ENCODE measurements at regions of chr4 and their contacts with region 1.

Region 1: GRCh38 chr4:141331534-141332358 is 111.1 kb downstream of the ZNF330 start:
- DNase-seq: no peak
- ATAC-seq: peak; percentile 40
- H3K4me3 ChIP-seq: peak overlapping the region; percentile 50
- H3K27ac ChIP-seq: peak overlapping the region; percentile 59
- H3K4me1 ChIP-seq: peaks cover 0 to 6% of the 10 kb centered on the region in 2 experiments; a peak in 2 of 5 replicates
- H3K27me3 ChIP-seq: no peaks in the 10 kb centered on the region
- CTCF ChIP-seq: no peak
- EP300 ChIP-seq: no peak
- POLR2A ChIP-seq: no peak
- RAD21 ChIP-seq: no peak

Region 2: GRCh38 chr4:140673729-140674128 is 658.0 kb before region 1 on chr4:
- CTCF ChIA-PET with region 1: no interaction called
- POLR2A ChIA-PET with region 1: no interaction called
- in situ Hi-C with region 1: no loop called
- intact Hi-C with region 1: no loop called
- DNase-seq: no peak
- ATAC-seq: no peak
- H3K4me3 ChIP-seq: no peak overlapping the region
- H3K27ac ChIP-seq: no peak overlapping the region
- H3K4me1 ChIP-seq: no peaks in the 10 kb centered on the region; a peak in 1 of 5 replicates
- H3K27me3 ChIP-seq: peaks cover 5 to 8% of the 10 kb centered on the region in 2 experiments; a peak in 3 of 5 replicates
- CTCF ChIP-seq: no peak
- EP300 ChIP-seq: no peak
- POLR2A ChIP-seq: no peak
- RAD21 ChIP-seq: no peak

Region 3: DNA sequence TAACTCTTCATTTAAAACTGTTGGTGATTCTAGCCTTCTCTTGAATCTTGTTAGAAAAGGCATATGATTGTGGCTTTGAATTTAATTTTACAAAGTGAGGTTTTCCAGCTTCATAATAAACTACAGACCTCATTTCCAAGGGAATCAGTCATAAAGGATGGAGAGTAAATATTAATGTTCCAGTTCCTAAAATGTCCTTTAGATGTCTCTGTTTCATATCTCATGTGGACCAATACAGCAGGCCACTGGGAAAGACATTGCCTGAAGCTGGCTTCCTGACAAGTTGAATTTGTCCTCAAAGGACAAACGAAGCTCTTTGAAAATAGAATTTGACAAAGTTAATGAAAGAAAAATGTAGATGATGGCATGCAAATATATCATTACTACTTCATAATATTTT is 14.4 kb after region 1 on chr4:
- CTCF ChIA-PET with region 1: no interaction called
- POLR2A ChIA-PET with region 1: interaction called, 10 read pairs
- in situ Hi-C with region 1: no loop called
- intact Hi-C with region 1: no loop called
- DNase-seq: peak; percentile 16 to 35 (median 24)
- ATAC-seq: peak; percentile 85
- H3K4me3 ChIP-seq: no peak overlapping the region
- H3K27ac ChIP-seq: no peak overlapping the region
- H3K4me1 ChIP-seq: peaks cover 0 to 4% of the 10 kb centered on the region in 2 experiments; a peak in 2 of 5 replicates
- H3K27me3 ChIP-seq: no peaks in the 10 kb centered on the region
- CTCF ChIP-seq: peak; percentile 5 to 55 (median 41); a peak in 3 of 6 replicates
- EP300 ChIP-seq: no peak
- POLR2A ChIP-seq: no peak
- RAD21 ChIP-seq: peak; percentile 49 to 59